ENCODE measurements at regions of chr20 and their contacts with region 1.

Region 1: DNA sequence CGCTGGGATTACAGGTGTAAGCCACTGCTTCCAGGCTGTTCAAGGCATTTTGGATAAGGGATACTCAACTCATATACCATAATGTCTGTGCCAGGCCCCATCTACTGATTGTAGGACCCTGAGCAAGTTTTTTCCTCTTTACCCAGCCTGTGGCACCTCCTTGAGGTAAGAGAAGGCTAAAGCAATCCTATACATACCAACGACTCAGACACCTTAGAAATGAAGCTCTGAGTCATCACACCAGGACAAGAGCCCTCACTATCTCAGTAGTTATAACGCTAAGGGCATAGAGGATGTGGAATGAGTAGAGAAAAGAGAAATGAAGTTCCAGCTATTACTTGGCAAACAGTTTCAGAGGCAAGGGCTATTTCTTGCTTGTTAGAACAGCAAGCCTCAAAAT is 16.9 kb downstream of the NDRG3 start:
- DNase-seq: peak; percentile 18
- H3K4me3 Mint-ChIP-seq: no peak overlapping the region
- H3K27ac Mint-ChIP-seq: no peak overlapping the region
- H3K4me1 Mint-ChIP-seq: peaks cover 28% of the 10 kb centered on the region
- H3K27me3 Mint-ChIP-seq: no peaks in the 10 kb centered on the region

Region 2: GRCh38 chr20:36717657-36718056 is 11.3 kb before region 1 on chr20:
- CTCF ChIA-PET with region 1: interaction called, 10 read pairs
- POLR2A ChIA-PET with region 1: no interaction called
- DNase-seq: peak; percentile 21
- H3K4me3 Mint-ChIP-seq: no peak overlapping the region
- H3K27ac Mint-ChIP-seq: no peak overlapping the region
- H3K4me1 Mint-ChIP-seq: peaks cover 12% of the 10 kb centered on the region
- H3K27me3 Mint-ChIP-seq: no peaks in the 10 kb centered on the region

Region 3: GRCh38 chr20:36754656-36755222 is 25.8 kb after region 1 on chr20:
- CTCF ChIA-PET with region 1: interaction called, 12 read pairs
- POLR2A ChIA-PET with region 1: no interaction called
- DNase-seq: peak; percentile 66
- H3K4me3 Mint-ChIP-seq: no peak overlapping the region
- H3K27ac Mint-ChIP-seq: no peak overlapping the region
- H3K4me1 Mint-ChIP-seq: peaks cover 9% of the 10 kb centered on the region
- H3K27me3 Mint-ChIP-seq: no peaks in the 10 kb centered on the region

Measured in activated CD4-positive, alpha-beta T cell treated with anti-CD3 and anti-CD28 coated beads, Interleukin-2, amount 10 ng/mL, durations not matched to agents 7 days and 5 days (primary cell).